Right ventricle myocardium superior (tissue), 1 donor: ENCODE measurements at regions of chr4 and their contacts with region 1.

Region 1: GRCh38 chr4:140523857-140524742 is at the start of gene ELMOD2:
- DNase-seq: peak; percentile 100
- ATAC-seq: peak; percentile 100
- total RNA-seq, gene ELMOD2: 10.5 TPM

Region 2: GRCh38 chr4:140363051-140363450 is 161.0 kb before region 1 on chr4:
- intact Hi-C with region 1: no loop called
- DNase-seq: no peak
- ATAC-seq: no peak

Region 3: DNA sequence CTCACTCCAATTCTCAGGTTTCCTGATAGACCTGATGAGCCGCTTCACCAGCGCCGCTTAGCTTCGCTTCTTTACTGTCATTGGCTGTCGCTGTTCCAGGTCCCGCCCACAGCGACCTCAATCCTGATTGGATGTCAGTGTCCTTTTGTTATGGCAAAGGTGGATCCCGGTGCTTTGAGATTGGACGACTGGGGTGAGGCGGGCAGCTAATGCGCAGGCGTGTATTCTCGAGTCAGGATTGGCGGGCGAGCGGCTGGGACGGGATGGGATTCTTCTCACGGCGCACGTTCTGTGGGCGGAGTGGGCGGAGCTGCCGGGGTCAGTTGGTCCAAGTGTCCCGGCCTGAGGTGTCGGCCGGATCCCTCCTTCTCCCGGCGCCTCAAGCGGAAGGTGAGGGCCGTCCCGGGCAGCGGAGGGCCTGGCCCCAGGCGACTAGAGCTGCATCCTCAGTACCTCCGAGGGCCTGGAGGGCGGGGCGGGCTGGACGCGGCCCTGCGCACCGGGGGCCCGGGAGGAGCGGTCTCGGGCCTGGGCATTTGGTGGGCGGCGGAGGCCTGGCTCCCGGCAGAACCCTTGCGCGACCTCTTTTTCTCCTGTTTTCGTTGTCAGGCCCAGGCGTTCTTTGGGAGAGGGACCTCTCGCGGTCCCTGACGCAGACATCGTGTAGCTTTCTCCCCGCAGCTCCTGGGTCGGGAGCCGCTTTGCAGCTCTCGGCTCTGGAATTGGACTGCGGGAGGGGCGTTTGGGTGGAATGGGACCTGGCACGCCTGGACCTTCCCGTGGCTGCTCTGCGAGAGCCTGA is 150.6 kb before region 1 on chr4 and contains the start of gene SCOC:
- intact Hi-C with region 1: loop called (anchors 5 kb)
- DNase-seq: peak; percentile 99
- ATAC-seq: peak; percentile 98
- total RNA-seq, gene SCOC: 67.9 TPM

Region 4: DNA sequence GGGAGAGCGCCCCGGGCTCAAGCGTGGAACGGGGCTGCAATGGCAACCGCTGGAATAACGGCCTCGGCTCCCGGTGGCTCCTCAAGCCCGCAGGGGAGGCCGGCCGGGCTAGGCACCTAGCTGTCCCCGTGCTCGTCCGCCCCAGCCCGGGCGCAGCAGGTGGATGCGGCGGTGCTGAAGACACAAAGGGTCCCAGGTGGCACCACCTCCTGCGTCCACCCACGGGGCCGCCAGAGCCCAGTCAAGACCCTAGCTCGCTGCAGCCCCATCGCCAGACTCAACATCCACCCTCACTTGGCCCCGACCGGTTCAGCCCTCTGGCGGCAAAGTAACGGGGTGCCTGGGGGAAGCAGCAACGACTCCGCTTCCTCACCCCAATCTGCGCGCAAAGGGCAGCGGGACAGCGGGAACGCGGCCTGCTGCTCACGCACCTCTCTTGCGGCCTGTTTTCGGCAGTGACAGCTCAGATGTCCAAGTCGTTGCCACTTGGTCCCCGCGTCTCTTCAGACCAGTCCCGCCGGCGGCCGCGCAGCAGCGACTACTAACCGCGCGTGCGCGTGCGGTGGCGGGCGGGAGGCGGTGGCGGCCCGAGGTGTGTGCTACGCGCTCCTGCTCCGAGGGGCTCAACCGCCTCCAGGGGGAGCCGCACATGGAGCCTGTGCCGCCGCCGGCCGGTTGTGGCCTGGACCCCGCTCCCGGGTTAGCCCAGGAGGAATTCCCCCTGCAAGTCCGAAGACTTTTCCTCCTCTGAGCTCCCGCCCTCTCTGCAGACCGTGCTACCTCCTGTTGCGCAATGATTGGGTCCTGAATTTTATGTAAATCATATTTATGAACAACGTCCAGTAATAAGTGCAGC is 96.8 kb before region 1 on chr4 and contains the start of gene CLGN:
- intact Hi-C with region 1: loop called (anchors 10 kb)
- DNase-seq: peak; percentile 86
- ATAC-seq: peak; percentile 97
- total RNA-seq, gene CLGN: 77.8 TPM

Region 5: GRCh38 chr4:141133146-141133998 is 609.3 kb after region 1 on chr4 and contains the start of gene RNF150:
- intact Hi-C with region 1: loop called (anchors 10 kb)
- DNase-seq: peak; percentile 79
- ATAC-seq: peak; percentile 83
- total RNA-seq, gene RNF150: 53.3 TPM